IMR-90 (cell line): ENCODE measurements at regions of chr14 and their contacts with region 1.

Region 1: DNA sequence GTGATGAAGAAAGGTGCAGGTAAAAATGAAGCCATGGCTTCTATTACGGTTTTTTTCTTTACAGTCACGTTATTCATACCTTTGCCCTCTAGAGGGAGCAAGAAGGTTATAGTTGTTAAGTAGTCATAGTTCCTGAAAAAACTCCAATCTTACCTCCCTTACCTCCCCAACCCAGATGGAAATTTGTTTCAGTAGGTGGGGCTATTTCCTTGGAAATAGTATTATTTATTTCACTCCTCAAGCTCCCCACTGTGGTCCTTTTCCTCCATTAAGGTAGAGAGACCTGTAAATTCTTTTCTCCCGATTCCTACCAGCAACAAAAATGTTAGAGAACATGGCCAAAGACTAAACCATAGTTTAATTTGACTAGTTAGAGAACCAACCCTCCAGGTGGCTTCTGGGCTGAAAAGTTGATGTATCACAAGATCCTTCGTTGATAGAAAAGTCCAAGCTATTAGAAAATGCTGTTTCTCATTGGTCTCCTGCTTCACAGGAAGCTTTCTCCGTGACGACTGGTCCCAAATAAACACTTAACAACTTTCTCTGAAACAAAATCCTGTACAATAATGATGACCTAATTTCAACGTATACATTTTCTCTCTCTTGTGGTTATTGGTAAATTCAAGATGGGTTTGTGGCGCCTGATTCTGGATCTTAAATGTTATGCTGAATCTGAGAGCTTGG is 43.5 kb downstream of the TMX1 start:
- DNase-seq: peak; percentile 93
- ATAC-seq: peak; percentile 95
- H3K4me3 ChIP-seq: no peak overlapping the region
- H3K27ac ChIP-seq: no peak overlapping the region
- H3K4me1 ChIP-seq: peaks cover 6% of the 10 kb centered on the region; the same call in 1 of the 2 replicates
- H3K27me3 ChIP-seq: no peaks in the 10 kb centered on the region
- CTCF ChIP-seq: peak; percentile 98
- POLR2A ChIP-seq: peak; percentile 43; the same call in 1 of the 2 replicates
- RAD21 ChIP-seq: peak; percentile 96

Region 2: GRCh38 chr14:51442513-51443175 is 159.1 kb after region 1 on chr14:
- CTCF ChIA-PET with region 1: interaction called, 5 read pairs
- POLR2A ChIA-PET with region 1: no interaction called
- dilution Hi-C with region 1: no loop called
- in situ Hi-C with region 1: no loop called
- intact Hi-C with region 1: loop called (anchors 1 kb)
- DNase-seq: peak; percentile 99
- ATAC-seq: peak; percentile 87
- H3K4me3 ChIP-seq: no peak overlapping the region
- H3K27ac ChIP-seq: peak overlapping the region; percentile 88
- H3K4me1 ChIP-seq: peaks cover 17% of the 10 kb centered on the region
- H3K27me3 ChIP-seq: no peaks in the 10 kb centered on the region
- CTCF ChIP-seq: no peak
- POLR2A ChIP-seq: no peak
- RAD21 ChIP-seq: peak; percentile 29; the same call in 1 of the 2 replicates

Region 3: DNA sequence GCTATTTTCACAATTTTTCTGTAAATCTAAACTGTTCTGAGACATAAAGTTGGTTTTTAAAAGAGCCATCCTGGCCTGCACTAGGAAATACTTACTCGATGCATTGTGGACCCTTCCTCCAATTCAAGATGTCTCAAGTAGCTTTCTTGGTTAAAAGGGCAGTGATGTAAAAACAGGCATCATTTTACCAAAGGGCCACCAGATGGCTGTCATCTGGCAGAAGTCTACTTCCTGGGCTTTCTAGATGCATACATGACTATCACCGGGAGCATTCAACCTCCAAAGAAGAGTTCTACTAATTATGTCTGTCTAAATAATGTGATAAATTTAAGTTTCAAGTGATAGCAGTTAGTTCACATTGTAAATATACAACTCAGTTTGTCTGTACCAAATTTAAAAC is 271.4 kb after region 1 on chr14:
- CTCF ChIA-PET with region 1: no interaction called
- POLR2A ChIA-PET with region 1: no interaction called
- dilution Hi-C with region 1: no loop called
- in situ Hi-C with region 1: no loop called
- intact Hi-C with region 1: loop called (anchors 2 kb)
- DNase-seq: peak; percentile 72
- ATAC-seq: peak; percentile 36
- H3K4me3 ChIP-seq: peak overlapping the region; percentile 19; the same call in 1 of the 2 replicates
- H3K27ac ChIP-seq: peak overlapping the region; percentile 89
- H3K4me1 ChIP-seq: peaks cover 20% of the 10 kb centered on the region
- H3K27me3 ChIP-seq: no peaks in the 10 kb centered on the region
- CTCF ChIP-seq: peak; percentile 33
- POLR2A ChIP-seq: no peak
- RAD21 ChIP-seq: peak; percentile 53

Region 4: DNA sequence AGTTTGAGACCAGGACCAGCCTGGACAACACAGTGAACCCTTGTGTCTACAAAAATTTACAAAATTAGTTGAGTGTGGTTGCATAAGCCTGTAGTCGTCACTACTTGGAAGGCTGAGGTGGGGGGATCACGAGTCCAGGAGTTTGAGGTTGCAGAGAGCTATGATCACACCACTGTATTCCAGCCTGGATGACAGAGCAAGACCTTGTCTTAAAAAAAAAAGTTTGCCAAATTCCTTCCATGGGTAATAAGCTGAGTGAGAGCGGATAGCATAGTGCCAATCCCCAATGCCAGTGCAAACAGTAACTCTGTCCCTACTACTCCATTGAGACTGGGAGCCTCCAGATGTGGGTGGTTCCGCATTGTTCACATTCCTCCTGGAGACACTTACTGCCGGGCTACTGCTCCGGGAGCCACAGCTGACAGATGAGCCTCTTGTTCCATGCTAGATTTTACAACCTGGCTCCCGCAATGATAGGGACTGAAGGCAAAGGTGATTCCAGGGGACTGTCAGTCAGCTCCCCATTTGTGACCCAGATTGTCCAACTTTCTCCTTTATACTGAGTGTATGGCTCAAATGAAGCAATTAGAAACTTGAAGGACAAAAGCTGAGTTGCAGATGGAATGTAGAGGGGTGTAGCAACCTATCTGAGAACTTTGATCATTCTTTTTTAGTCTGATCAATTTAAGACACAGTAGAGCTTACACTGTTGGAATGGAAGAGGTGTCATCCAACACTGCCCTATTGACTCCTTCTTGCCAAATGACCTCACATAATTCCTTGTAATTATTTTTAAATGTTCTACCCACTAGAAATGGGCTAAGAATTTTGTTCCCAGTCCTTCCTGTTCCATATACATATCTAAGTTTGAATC is 354.8 kb after region 1 on chr14:
- CTCF ChIA-PET with region 1: no interaction called
- POLR2A ChIA-PET with region 1: no interaction called
- dilution Hi-C with region 1: no loop called
- in situ Hi-C with region 1: no loop called
- intact Hi-C with region 1: no loop called
- DNase-seq: no peak
- ATAC-seq: peak; percentile 80
- H3K4me3 ChIP-seq: no peak overlapping the region
- H3K27ac ChIP-seq: no peak overlapping the region
- H3K4me1 ChIP-seq: peaks cover 10% of the 10 kb centered on the region
- H3K27me3 ChIP-seq: no peaks in the 10 kb centered on the region
- CTCF ChIP-seq: no peak
- POLR2A ChIP-seq: no peak
- RAD21 ChIP-seq: no peak

Region 5: DNA sequence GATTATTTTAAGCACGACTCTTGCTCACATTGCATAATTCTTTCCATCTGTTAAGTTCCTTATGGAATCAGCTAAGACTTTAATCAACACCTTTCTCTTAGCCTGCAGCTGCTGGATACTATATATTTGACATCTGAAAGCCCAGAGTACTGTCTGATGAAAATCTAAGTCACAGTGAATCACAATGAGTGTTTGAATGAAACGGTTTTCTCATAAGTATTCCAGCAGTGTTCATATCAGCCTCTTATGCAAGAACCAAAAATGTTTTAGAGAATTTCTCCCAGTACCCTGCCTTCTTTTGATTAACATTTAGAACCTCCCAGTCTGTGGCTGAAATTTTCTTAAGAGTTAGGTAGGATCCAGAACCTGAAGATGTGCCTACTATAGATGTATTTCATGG is 423.8 kb after region 1 on chr14:
- CTCF ChIA-PET with region 1: interaction called, 3 read pairs
- POLR2A ChIA-PET with region 1: no interaction called
- dilution Hi-C with region 1: no loop called
- in situ Hi-C with region 1: no loop called
- intact Hi-C with region 1: loop called (anchors 5 kb)
- DNase-seq: no peak
- ATAC-seq: no peak; the same call in 1 of the 2 replicates
- H3K4me3 ChIP-seq: no peak overlapping the region
- H3K27ac ChIP-seq: no peak overlapping the region
- H3K4me1 ChIP-seq: peaks cover 5% of the 10 kb centered on the region
- H3K27me3 ChIP-seq: no peaks in the 10 kb centered on the region
- CTCF ChIP-seq: no peak
- POLR2A ChIP-seq: no peak
- RAD21 ChIP-seq: no peak

Region 6: DNA sequence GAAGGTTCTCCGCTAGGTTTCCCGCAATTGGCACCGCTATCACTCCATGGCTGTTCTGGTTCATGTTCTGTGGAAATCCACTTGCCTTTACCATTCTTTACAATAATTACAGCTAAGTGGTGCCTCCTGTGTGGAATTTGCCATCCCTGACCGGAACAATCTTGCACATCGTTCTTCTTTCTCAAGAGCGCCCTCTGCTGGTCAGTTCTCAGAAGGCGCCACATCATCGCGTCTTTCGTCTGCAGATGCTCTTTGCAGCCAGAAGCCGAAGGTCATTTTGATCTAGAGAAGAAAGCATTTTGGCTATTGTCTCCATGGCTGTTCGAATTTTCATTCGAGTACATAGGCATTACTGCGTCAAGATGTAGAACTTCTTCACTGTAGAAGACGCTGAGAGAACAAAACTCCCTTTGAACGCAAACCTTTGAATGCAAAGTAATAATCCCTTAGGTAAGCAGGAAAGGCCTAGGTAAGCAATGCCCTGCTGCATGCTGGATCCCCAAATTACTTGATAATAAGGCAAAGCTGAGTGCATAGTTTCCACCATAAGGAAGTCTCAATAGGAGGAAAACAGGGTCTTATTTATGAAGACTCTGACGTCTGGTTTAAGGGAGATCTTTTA is 695.7 kb after region 1 on chr14:
- CTCF ChIA-PET with region 1: interaction called, 7 read pairs
- POLR2A ChIA-PET with region 1: no interaction called
- dilution Hi-C with region 1: no loop called
- in situ Hi-C with region 1: no loop called
- intact Hi-C with region 1: loop called (anchors 5 kb)
- DNase-seq: peak; percentile 79
- ATAC-seq: peak; percentile 83
- H3K4me3 ChIP-seq: no peak overlapping the region
- H3K27ac ChIP-seq: no peak overlapping the region
- H3K4me1 ChIP-seq: peaks cover 6% of the 10 kb centered on the region
- H3K27me3 ChIP-seq: peaks cover 10% of the 10 kb centered on the region
- CTCF ChIP-seq: peak; percentile 85
- POLR2A ChIP-seq: no peak
- RAD21 ChIP-seq: peak; percentile 90